AG04450 (cell line): ENCODE measurements at regions of chr10 and their contacts with region 1.

Region 1: DNA sequence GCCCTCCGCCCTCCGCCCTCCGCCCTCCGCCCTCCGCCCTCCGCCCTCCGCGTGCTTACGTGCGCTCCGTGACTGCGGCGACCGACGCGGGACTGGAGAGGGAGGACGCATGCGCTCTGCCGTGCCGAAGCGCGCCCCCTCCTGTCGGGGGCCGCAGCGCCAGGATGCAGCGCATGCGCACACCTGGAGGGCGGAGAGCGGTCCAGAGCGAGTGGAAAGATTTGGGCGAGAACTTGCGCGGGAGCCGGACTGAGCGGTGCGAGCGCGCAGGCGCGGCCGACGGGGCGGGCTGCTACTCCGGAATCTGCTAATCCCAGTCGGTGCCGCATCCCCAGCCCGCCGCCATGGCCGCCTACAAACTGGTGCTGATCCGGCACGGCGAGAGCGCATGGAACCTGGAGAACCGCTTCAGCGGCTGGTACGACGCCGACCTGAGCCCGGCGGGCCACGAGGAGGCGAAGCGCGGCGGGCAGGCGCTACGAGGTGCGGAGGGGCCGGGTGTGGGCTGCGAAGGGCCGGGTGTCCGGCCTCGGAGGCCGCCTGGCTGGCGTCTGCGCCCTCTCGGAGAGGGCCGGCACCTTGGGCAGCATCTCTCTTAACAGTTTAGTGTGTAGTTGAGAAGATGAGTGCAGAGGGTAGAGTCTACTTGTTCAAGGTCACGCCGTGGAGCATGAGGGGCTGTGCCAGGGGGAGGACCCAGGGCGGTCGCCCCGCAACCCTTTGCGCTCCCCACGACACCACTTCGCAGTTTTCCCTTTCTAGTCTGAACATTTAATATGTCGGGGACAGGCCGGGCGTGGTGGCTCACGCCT is at the start of gene PGAM1:
- DNase-seq: peak; percentile 91
- H3K4me3 ChIP-seq: peak within 1 kb of the TSS; percentile 95
- H3K27ac ChIP-seq: peak within 1 kb of the TSS; percentile 47
- H3K27me3 ChIP-seq: no peaks in the 10 kb centered on the region
- CTCF ChIP-seq: peak; percentile 63
- polyA plus RNA-seq, gene PGAM1: 452 and 459 TPM in 2 replicates

Region 2: GRCh38 chr10:97390091-97390490 is 36.1 kb before region 1 on chr10:
- CTCF ChIA-PET with region 1: interaction called, 11 read pairs
- POLR2A ChIA-PET with region 1: no interaction called
- DNase-seq: no peak
- H3K4me3 ChIP-seq: no peak overlapping the region
- H3K27ac ChIP-seq: no peak overlapping the region
- H3K27me3 ChIP-seq: no peaks in the 10 kb centered on the region
- CTCF ChIP-seq: no peak